ENCODE measurements at regions of chr15 and their contacts with region 1.

Region 1: GRCh38 chr15:34209421-34210282 is at the start of gene KATNBL1:
- DNase-seq: peak; percentile 98
- ATAC-seq: peak; percentile 100
- total RNA-seq, gene KATNBL1: 19.3 TPM

Region 2: GRCh38 chr15:34056936-34057335 is 152.7 kb before region 1 on chr15:
- intact Hi-C with region 1: loop called (anchors 1 kb)
- DNase-seq: no peak
- ATAC-seq: no peak

Region 3: GRCh38 chr15:34314491-34315490 is 105.1 kb after region 1 on chr15:
- intact Hi-C with region 1: no loop called
- DNase-seq: no peak
- ATAC-seq: no peak